Posterior cingulate gyrus (tissue), 11 donors: ENCODE measurements at regions of chr15 and their contacts with region 1.

Region 1: GRCh38 chr15:48963524-48964113 is at the start of gene SHC4:
- DNase-seq: peak; percentile 44 to 96 (median 80)

Region 2: DNA sequence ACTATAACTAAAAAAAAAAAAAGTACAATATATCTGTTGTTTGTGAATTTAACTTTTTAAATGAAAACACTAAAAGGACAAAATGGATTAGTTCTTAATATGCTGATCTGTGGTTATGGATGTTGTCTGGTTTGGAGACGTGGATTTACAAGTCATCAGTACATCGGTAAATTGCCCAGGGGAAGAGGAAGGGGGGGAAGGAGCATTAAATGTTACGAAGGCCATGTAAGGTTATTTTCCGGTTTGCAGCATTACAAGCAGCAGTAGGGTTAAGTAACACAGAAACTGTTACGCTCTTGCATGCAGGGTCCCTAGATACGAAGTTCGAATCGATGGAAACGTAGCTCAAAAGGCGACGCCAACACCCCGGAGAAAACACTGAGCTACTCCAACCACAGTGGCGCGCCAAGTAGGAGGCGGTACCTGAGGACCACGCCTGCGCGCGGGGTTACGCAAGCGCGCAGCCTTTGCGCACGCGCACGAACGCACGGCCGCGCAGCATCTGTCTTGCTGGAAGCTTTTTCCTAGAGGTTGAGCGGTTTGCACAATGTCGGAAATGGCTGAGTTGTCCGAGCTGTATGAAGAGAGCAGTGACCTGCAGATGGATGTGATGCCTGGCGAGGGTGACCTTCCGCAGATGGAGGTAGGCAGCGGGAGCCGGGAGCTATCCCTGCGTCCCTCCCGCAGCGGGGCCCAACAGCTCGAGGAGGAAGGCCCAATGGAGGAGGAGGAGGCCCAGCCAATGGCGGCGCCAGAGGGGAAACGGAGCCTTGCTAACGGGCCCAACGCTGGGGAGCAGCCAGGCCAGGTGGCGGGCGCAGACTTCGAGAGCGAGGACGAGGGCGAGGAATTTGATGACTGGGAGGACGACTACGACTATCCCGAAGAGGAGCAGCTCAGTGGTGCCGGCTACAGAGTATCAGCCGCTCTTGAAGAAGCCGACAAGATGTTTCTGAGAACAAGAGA is 85.7 kb before region 1 on chr15 and contains the start of gene EID1:
- intact Hi-C with region 1: loop called (anchors 5 kb)
- DNase-seq: peak; percentile 87 to 98 (median 90)